ENCODE measurements at regions of chr13 and their contacts with region 1.

Region 1: GRCh38 chr13:50156561-50157127 is 141.4 kb downstream of the KCNRG start:
- DNase-seq: no peak
- H3K4me3 ChIP-seq: no peak overlapping the region
- H3K27ac ChIP-seq: no peak overlapping the region
- H3K27me3 ChIP-seq: no peaks in the 10 kb centered on the region
- CTCF ChIP-seq: no peak

Region 2: GRCh38 chr13:50353651-50354415 is 197.2 kb after region 1 on chr13:
- CTCF ChIA-PET with region 1: no interaction called
- POLR2A ChIA-PET with region 1: interaction called, 11 read pairs
- DNase-seq: peak; percentile 15
- H3K4me3 ChIP-seq: no peak overlapping the region
- H3K27ac ChIP-seq: no peak overlapping the region
- H3K27me3 ChIP-seq: no peaks in the 10 kb centered on the region
- CTCF ChIP-seq: no peak